Gastrocnemius medialis (tissue), 4 donors: ENCODE measurements at regions of chr9 and their contacts with region 1.

Region 1: DNA sequence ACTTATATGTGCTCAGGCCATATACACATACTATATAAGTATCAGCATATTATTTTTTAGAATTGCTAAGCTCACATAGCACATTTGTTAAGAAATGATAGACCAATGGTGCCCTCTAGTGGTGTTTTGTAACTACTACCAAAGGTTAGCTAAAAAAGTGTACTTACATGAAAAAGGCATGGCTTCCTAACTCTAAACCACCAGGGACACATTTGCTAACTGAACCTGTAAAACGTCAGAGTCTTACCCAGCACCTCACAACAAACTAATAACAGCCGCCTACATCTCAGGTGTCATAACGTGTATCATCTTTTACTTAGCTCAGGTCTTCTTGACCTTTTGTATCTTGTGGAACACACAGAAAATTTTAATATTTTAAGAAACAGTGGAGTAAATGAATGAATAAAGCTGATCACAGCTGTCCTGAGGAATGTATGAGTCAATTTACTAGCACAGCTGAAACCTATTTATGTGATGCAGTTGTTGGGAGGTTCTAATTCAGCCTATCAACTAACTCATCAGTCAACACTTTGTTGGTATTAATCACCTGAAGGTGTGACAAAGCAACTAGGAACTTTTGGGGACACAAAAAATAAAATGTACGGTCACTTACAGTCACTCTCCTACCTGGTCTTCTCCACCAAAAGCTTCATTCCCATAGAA is 72.9 kb downstream of the BAAT start:
- DNase-seq: no peak
- ATAC-seq: peak; percentile 47 to 75
- H3K4me3 ChIP-seq: no peak overlapping the region
- H3K27ac ChIP-seq: no peak overlapping the region
- H3K4me1 ChIP-seq: no peaks in the 10 kb centered on the region
- H3K27me3 ChIP-seq: no peaks in the 10 kb centered on the region
- CTCF ChIP-seq: peak; percentile 50 to 70 (median 63)
- POLR2A ChIP-seq: no peak

Region 2: DNA sequence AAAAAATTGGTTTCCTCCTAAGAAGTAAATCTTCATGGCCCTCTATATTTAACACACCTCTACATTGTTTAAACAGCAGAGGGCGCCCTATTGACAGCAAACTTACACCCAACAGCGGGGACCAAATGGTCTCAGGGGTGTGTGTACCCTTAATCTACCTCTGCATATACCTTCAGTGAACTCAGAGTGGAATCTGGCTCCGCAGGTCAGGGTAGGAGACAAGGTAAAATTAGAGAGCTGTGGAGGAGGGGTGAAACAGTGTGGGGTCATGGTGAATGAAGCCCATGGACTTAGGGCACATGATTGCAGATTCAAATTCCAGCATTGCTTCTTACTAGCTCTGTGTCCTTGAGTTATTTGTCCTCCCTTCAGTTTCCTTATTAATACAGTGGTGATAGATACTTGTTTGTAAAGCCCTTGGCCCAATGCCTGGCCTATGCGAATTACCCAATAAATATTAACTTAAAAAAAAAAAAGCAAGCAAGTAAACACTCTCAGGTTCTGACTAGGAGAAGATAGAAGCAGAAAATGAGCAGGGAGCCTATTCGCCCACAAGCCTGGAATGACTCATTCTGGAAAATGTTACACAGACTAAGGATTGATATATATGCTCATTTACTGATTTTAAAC is 611.1 kb before region 1 on chr9:
- in situ Hi-C with region 1: loop called in 3 of 4 experiments (anchors 25 kb)
- intact Hi-C with region 1: loop called (anchors 5 kb)
- DNase-seq: no peak
- ATAC-seq: no peak
- H3K4me3 ChIP-seq: no peak overlapping the region
- H3K27ac ChIP-seq: no peak overlapping the region
- H3K4me1 ChIP-seq: no peaks in the 10 kb centered on the region
- H3K27me3 ChIP-seq: no peaks in the 10 kb centered on the region
- CTCF ChIP-seq: peak in 3 of 5 experiments; percentile 12 to 19 (median 17)
- POLR2A ChIP-seq: no peak

Region 3: GRCh38 chr9:100714372-100715099 is 597.4 kb before region 1 on chr9:
- in situ Hi-C with region 1: loop called in 3 of 4 experiments (anchors 25 kb)
- intact Hi-C with region 1: loop called (anchors 5 kb)
- DNase-seq: no peak
- ATAC-seq: no peak
- H3K4me3 ChIP-seq: no peak overlapping the region
- H3K27ac ChIP-seq: no peak overlapping the region
- H3K4me1 ChIP-seq: no peaks in the 10 kb centered on the region
- H3K27me3 ChIP-seq: no peaks in the 10 kb centered on the region
- CTCF ChIP-seq: peak in 4 of 5 experiments; percentile 42 to 63 (median 50)
- POLR2A ChIP-seq: no peak